Activated CD4-positive, alpha-beta T cell treated with anti-CD3 and anti-CD28 coated beads, Interleukin-2, amount 10 ng/mL, durations not matched to agents 24 days and 14 days (primary cell): ENCODE measurements at regions of chr9 and their contacts with region 1.

Region 1: GRCh38 chr9:127418037-127418471 is 6.1 kb upstream of the ZNF79 start:
- DNase-seq: peak; percentile 84
- H3K4me3 Mint-ChIP-seq: no peak overlapping the region
- H3K27ac Mint-ChIP-seq: no peak overlapping the region
- H3K4me1 Mint-ChIP-seq: peaks cover 4% of the 10 kb centered on the region
- H3K27me3 Mint-ChIP-seq: peaks cover 17% of the 10 kb centered on the region

Region 2: DNA sequence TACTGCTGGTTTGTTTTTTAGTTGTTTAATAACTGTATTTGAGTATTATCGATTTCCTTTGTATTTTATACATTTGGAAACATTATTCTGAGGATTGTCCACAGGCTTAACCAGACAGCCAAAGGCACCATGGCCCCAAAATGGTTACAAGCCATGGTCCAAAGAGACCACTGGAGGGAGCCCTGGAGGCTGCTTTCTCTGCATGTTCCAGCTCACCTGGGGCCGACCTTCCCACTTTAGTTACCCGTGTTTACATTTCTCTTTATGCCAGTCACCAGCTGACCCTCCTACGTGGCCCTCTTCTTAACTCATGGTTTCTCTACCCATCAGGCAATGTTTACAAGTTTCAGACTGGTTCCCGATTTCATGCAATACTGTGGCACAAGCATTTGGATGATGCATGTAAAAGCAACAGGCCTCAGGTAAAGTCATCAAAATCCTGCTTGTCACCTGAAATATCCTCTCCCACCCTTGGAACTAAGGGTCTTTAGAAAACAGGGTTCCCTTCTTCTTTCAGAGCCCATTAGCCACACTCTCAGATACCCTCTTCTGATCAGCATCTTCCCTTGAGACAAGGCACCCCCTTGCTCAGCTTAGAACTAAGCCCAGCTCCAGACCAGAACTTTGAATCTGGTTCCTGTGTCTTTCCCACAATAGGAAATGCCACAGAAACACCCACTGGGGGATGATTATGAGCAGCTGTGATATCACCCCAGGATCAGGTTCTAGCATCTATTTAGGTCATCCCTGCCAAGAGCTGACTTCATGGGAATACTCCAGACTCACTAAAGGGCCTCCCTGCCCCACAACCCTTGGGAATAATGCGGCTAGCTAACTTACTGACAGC is 203.4 kb before region 1 on chr9:
- intact Hi-C with region 1: loop called (anchors 1 kb)
- DNase-seq: peak; percentile 89
- H3K4me3 Mint-ChIP-seq: no peak overlapping the region
- H3K27ac Mint-ChIP-seq: no peak overlapping the region
- H3K4me1 Mint-ChIP-seq: no peaks in the 10 kb centered on the region
- H3K27me3 Mint-ChIP-seq: peaks cover 17% of the 10 kb centered on the region